Ascending aorta (tissue), 2 donors: ENCODE measurements at regions of chr3 and their contacts with region 1.

Region 1: GRCh38 chr3:156142702-156143101 is 22.3 kb downstream of the KCNAB1 start:
- DNase-seq: no peak
- H3K4me3 ChIP-seq: peak overlapping the region; percentile 31 to 55
- H3K27ac ChIP-seq: peak overlapping the region; percentile 76 to 77
- H3K4me1 ChIP-seq: peaks cover 0 to 23% of the 10 kb centered on the region in 2 donors
- H3K27me3 ChIP-seq: no peaks in the 10 kb centered on the region
- CTCF ChIP-seq: no peak

Region 2: GRCh38 chr3:156106721-156107373 is 35.9 kb before region 1 on chr3:
- intact Hi-C with region 1: loop called (anchors 5 kb)
- DNase-seq: no peak
- H3K4me3 ChIP-seq: no peak overlapping the region
- H3K27ac ChIP-seq: peak overlapping the region in 1 of 2 donors; percentile 24
- H3K4me1 ChIP-seq: peaks cover 4 to 31% of the 10 kb centered on the region in 2 donors
- H3K27me3 ChIP-seq: no peaks in the 10 kb centered on the region
- CTCF ChIP-seq: peak in 1 of 3 experiments; percentile 18